Activated naive CD8-positive, alpha-beta T cell treated with anti-CD3 and anti-CD28 coated beads, Interleukin-2, amount 10 ng/mL, durations not matched to agents 7 days and 5 days (primary cell): ENCODE measurements at regions of chr12 and their contacts with region 1.

Region 1: GRCh38 chr12:4276524-4277204 is 3.1 kb downstream of the CCND2 start:
- DNase-seq: peak; percentile 76
- ATAC-seq: peak; percentile 13
- H3K4me3 Mint-ChIP-seq: peak overlapping the region; percentile 90
- H3K27ac Mint-ChIP-seq: peak overlapping the region; percentile 99
- H3K4me1 Mint-ChIP-seq: peaks cover 41% of the 10 kb centered on the region
- H3K27me3 Mint-ChIP-seq: no peaks in the 10 kb centered on the region

Region 2: GRCh38 chr12:3885277-3886094 is 391.2 kb before region 1 on chr12:
- POLR2A ChIA-PET with region 1: interaction called, 14 read pairs
- DNase-seq: no peak
- ATAC-seq: no peak
- H3K4me3 Mint-ChIP-seq: peak overlapping the region; percentile 55
- H3K27ac Mint-ChIP-seq: peak overlapping the region; percentile 1
- H3K4me1 Mint-ChIP-seq: peaks cover 7% of the 10 kb centered on the region
- H3K27me3 Mint-ChIP-seq: peaks cover 3% of the 10 kb centered on the region

Region 3: DNA sequence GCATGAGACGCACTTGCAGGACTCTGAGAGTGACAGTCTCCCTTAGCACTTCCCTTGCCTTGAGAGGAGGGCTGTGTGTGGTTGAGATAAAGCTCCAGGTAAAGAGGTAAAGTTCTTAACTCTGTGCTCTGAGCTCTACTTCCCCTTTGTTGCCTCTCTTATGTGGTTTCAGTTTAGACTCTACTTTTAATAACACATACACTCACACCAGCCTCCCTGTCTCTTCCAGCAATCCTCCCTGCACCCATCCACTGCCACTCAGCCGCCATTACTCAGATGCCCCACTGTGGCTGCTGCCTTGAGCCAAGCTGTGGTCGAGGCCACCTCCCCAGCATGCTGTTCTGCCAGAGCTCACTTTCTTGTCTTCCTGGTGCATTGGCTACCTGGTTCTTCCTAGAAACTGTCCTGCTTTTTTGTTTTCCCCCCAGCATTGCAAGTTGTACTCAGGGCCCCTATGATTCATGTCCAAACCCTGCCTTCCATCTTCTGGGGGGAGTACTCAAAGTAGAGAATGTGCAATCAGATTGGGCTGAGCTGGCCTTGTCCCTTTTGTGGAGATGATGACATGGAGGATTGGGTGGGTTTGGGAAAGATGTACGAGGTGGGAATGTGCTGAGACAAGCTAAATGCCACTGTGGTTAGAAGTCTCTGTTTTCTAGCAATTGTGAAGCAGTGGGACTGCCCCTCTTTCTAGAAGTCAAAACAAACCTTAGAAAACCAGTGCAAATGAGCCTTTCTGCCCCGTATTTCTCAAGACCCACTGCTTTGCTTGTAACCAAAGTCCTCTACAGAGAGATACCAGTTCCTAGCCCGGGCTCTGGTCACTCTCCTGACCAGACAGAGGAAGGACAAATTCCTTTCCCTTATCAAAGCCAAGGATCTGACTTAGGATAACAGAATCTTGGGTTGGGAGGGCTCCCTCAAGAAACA is 287.9 kb before region 1 on chr12:
- POLR2A ChIA-PET with region 1: interaction called, 14 read pairs
- DNase-seq: peak; percentile 57
- ATAC-seq: peak; percentile 90
- H3K4me3 Mint-ChIP-seq: peak overlapping the region; percentile 57
- H3K27ac Mint-ChIP-seq: peak overlapping the region; percentile 87
- H3K4me1 Mint-ChIP-seq: peaks cover 19% of the 10 kb centered on the region
- H3K27me3 Mint-ChIP-seq: no peaks in the 10 kb centered on the region

Region 4: DNA sequence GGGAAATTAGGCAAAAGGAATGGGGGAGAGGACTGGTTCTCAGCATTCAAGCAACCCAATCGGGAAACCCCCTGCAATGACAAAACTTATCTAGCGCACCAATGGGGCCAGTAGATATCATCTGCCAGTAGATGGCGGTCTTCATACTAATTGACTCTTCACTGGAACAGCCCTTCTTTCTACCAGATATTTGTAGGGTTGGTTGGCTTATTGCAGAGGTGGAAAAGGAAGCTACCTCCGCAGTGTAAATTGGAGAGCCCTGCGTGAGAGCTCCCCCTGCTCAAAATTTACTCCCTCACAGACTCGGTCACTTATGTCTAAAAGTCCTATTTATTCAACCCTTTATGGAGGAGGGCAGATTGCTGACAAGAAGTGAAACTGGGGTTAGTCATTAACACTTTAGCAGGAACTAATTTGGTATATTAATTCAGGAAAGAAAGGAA is 169.2 kb before region 1 on chr12:
- POLR2A ChIA-PET with region 1: interaction called, 160 read pairs
- DNase-seq: no peak
- ATAC-seq: peak; percentile 86
- H3K4me3 Mint-ChIP-seq: peak overlapping the region; percentile 76
- H3K27ac Mint-ChIP-seq: peak overlapping the region; percentile 93
- H3K4me1 Mint-ChIP-seq: peaks cover 48% of the 10 kb centered on the region
- H3K27me3 Mint-ChIP-seq: no peaks in the 10 kb centered on the region

Region 5: GRCh38 chr12:4148418-4149056 is 128.1 kb before region 1 on chr12:
- POLR2A ChIA-PET with region 1: interaction called, 292 read pairs
- DNase-seq: no peak
- ATAC-seq: peak; percentile 8
- H3K4me3 Mint-ChIP-seq: peak overlapping the region; percentile 35
- H3K27ac Mint-ChIP-seq: peak overlapping the region; percentile 89
- H3K4me1 Mint-ChIP-seq: peaks cover 81% of the 10 kb centered on the region
- H3K27me3 Mint-ChIP-seq: no peaks in the 10 kb centered on the region

Region 6: DNA sequence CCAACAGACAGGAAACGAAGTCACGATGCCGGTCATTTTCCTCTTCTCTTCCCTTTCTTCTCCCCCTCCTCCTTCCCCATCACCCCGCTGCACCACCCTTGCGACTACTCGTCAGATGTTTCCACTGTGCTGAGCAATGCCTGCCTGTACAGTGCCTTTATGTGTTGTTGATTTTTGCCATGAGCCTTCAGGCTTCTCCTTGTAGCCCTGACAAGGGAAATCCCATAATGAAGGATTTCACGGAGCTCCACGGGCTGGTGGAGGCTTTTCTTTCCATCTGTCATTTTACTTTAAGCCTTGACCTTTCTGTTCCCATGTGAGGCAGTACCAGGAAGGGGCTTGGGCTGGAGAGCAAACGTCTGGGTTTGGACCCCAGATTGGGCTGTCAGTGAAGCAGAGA is 31.8 kb before region 1 on chr12:
- POLR2A ChIA-PET with region 1: no interaction called
- DNase-seq: no peak
- ATAC-seq: no peak
- H3K4me3 Mint-ChIP-seq: no peak overlapping the region
- H3K27ac Mint-ChIP-seq: no peak overlapping the region
- H3K4me1 Mint-ChIP-seq: peaks cover 10% of the 10 kb centered on the region
- H3K27me3 Mint-ChIP-seq: peaks cover 5% of the 10 kb centered on the region

Region 7: GRCh38 chr12:4256043-4256826 is 20.4 kb before region 1 on chr12:
- POLR2A ChIA-PET with region 1: interaction called, 15 read pairs
- DNase-seq: no peak
- ATAC-seq: no peak
- H3K4me3 Mint-ChIP-seq: no peak overlapping the region
- H3K27ac Mint-ChIP-seq: no peak overlapping the region
- H3K4me1 Mint-ChIP-seq: peaks cover 11% of the 10 kb centered on the region
- H3K27me3 Mint-ChIP-seq: peaks cover 7% of the 10 kb centered on the region